ENCODE measurements at regions of chr14 and their contacts with region 1.

Region 1: DNA sequence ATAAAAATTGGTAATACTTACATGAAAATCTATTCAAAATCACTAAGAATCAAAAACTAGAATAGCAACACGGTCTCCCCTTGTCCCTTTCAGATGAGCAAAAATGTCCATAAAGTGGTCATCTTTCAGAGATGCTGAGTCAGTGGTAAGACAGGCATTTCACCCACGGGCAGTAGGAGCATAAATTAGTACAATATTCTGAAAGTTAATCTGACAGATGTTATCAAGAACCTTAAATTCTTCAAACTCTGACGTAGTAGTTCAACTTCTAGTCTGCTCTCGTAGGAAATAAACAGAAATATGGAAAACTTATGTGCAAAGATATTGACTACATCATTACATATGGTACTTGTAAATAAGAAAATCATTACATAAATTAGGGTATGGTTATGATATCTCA is 33.1 kb upstream of the GNPNAT1 start:
- DNase-seq: no peak
- ATAC-seq: no peak

Region 2: DNA sequence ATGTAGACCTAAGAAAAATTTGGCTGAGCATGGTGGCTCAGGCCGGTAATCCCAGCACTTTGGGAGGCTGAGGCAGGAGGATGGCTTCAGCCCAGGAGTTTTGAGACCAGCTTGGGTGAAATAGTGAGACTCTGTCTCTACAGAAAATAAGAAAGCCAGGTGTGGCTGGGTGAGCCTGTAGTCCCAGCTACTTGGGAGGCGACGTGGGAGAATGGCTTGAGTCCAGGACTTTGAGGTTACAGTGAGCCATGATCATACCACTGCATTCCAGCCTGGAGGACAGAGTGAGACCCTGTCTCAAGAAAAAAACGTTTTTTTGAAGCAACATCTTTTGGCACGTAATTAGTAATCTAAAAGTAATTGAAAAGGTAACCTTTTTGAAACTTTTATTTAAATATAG is 55.5 kb after region 1 on chr14:
- intact Hi-C with region 1: no loop called
- DNase-seq: no peak
- ATAC-seq: peak; percentile 17

Region 3: GRCh38 chr14:52961060-52961639 is 136.6 kb after region 1 on chr14:
- intact Hi-C with region 1: loop called (anchors 5 kb)
- DNase-seq: peak; percentile 29
- ATAC-seq: peak; percentile 96

Measured in left ventricle myocardium superior (tissue), 1 donor.